ENCODE measurements at regions of chr7 and their contacts with region 1.

Region 1: GRCh38 chr7:132154248-132154647 is 422.0 kb downstream of the PLXNA4 start:
- DNase-seq: no peak
- H3K4me3 ChIP-seq: no peak overlapping the region
- H3K27ac ChIP-seq: no peak overlapping the region
- H3K4me1 ChIP-seq: no peaks in the 10 kb centered on the region
- H3K27me3 ChIP-seq: no peaks in the 10 kb centered on the region
- CTCF ChIP-seq: peak; percentile 6 to 26

Region 2: DNA sequence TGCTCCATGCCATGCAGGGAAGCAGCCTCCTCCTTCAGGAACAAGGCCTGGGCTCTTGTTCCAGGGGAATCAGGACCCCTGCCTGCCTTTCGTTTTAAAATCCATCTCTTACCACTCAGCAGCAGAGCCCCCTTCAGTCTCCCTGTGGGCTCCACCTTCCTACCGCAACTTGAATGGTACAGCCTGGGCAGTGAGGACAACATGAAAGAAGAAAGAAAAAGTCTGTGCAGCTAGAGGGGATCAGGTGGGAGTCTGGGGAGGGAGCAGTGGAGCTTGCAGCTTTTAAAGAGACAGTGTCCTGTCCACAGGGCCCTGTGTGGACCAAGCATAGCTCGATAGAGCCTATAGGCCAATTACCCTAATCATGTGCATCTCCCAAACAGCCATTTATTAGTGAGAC is 418.3 kb after region 1 on chr7:
- CTCF ChIA-PET with region 1: interaction called, 46 read pairs
- dilution Hi-C with region 1: no loop called
- in situ Hi-C with region 1: no loop called
- intact Hi-C with region 1: no loop called
- DNase-seq: no peak
- H3K4me3 ChIP-seq: no peak overlapping the region
- H3K27ac ChIP-seq: no peak overlapping the region
- H3K4me1 ChIP-seq: peaks cover 6% of the 10 kb centered on the region
- H3K27me3 ChIP-seq: peaks cover 32% of the 10 kb centered on the region
- CTCF ChIP-seq: no peak

Region 3: DNA sequence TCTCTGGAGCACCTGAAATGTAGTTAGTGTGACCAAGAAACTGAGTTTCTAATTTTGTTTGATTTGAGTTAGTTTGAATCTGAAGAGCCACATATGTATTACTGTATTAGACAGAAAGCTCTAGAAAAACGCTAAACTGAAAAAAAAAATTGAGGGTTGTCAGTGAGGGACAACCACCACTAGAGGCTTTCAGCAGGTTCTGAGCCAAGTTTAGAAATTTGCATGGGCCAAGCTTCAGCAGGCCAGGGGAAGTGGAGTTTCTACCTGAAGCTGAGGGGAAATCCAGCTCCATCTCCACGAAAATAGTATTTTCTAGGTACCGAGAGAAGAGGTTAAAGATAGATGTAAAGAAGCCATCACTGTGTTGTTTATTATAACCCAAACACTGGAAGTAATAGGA is 499.9 kb after region 1 on chr7:
- CTCF ChIA-PET with region 1: no interaction called
- dilution Hi-C with region 1: no loop called
- in situ Hi-C with region 1: no loop called
- intact Hi-C with region 1: no loop called
- DNase-seq: no peak
- H3K4me3 ChIP-seq: no peak overlapping the region
- H3K27ac ChIP-seq: no peak overlapping the region
- H3K4me1 ChIP-seq: peaks cover 6% of the 10 kb centered on the region
- H3K27me3 ChIP-seq: no peaks in the 10 kb centered on the region
- CTCF ChIP-seq: no peak

Measured in mammary epithelial cell (primary cell).